Endothelial cell of umbilical vein (primary cell): ENCODE measurements at regions of chr1 and their contacts with region 1.

Region 1: GRCh38 chr1:209674957-209675564 is at the start of gene G0S2:
- DNase-seq: no peak
- H3K4me3 ChIP-seq: peak within 1 kb of the TSS in 1 of 3 experiments; percentile 28
- H3K27ac ChIP-seq: no peak within 1 kb of the TSS
- H3K4me1 ChIP-seq: peaks cover 6% of the 10 kb centered on the region
- H3K27me3 ChIP-seq: peaks cover 36 to 69% of the 10 kb centered on the region in 2 experiments
- CTCF ChIP-seq: no peak
- POLR2A ChIP-seq: peak; percentile 60
- total RNA-seq, gene G0S2: 1.9 TPM in 1 of 2 replicates, not detected in the other

Region 2: DNA sequence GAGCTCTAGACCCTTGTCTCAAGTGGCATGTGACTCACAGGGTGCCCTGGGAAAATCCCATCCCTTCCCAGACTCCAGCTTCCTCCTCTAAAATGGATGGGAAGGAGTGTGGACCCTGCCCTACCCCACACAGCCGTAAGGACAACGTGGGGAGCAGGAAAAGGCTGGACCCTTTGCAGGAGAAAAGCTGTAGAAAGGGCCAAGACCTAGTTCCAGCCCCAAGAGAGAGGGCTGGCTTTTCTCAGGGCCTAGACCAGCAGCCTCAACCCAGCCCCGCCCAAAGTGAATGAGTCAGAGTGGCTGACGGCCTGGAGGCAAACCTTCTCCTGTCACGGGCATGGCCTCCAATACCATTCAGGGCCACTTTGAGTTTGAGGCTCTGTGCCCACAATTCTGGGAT is 23.9 kb before region 1 on chr1:
- CTCF ChIA-PET with region 1: interaction called, 10 read pairs
- POLR2A ChIA-PET with region 1: interaction called, 4 read pairs
- dilution Hi-C with region 1: no loop called
- intact Hi-C with region 1: loop called (anchors 1 kb)
- DNase-seq: peak; percentile 77
- H3K4me3 ChIP-seq: no peak overlapping the region
- H3K27ac ChIP-seq: peak overlapping the region; percentile 60
- H3K4me1 ChIP-seq: peaks cover 27% of the 10 kb centered on the region
- H3K27me3 ChIP-seq: no peaks in the 10 kb centered on the region
- CTCF ChIP-seq: no peak
- POLR2A ChIP-seq: no peak

Region 3: GRCh38 chr1:209755926-209756614 is 81.0 kb after region 1 on chr1 and contains the start of gene TRAF3IP3:
- CTCF ChIA-PET with region 1: no interaction called
- POLR2A ChIA-PET with region 1: no interaction called
- dilution Hi-C with region 1: no loop called
- intact Hi-C with region 1: no loop called
- DNase-seq: no peak
- H3K4me3 ChIP-seq: no peak within 1 kb of the TSS
- H3K27ac ChIP-seq: no peak within 1 kb of the TSS
- H3K4me1 ChIP-seq: no peaks in the 10 kb centered on the region
- H3K27me3 ChIP-seq: peaks cover 2 to 7% of the 10 kb centered on the region in 2 experiments
- CTCF ChIP-seq: no peak
- POLR2A ChIP-seq: no peak
- total RNA-seq, gene TRAF3IP3: not detected in 2 replicates